Activated B cell treated with CpG ODN at 0.5 μM for 24 hours (primary cell): ENCODE measurements at regions of chr9 and their contacts with region 1.

Region 1: GRCh38 chr9:90219548-90220118 is 423.0 kb downstream of the DIRAS2 start:
- DNase-seq: peak; percentile 55
- ATAC-seq: peak; percentile 86
- H3K4me3 Mint-ChIP-seq: peak overlapping the region; percentile 46
- H3K27ac Mint-ChIP-seq: no peak overlapping the region
- H3K4me1 Mint-ChIP-seq: peaks cover 10% of the 10 kb centered on the region
- H3K27me3 Mint-ChIP-seq: peaks cover 9% of the 10 kb centered on the region
- CTCF ChIP-seq: no peak

Region 2: DNA sequence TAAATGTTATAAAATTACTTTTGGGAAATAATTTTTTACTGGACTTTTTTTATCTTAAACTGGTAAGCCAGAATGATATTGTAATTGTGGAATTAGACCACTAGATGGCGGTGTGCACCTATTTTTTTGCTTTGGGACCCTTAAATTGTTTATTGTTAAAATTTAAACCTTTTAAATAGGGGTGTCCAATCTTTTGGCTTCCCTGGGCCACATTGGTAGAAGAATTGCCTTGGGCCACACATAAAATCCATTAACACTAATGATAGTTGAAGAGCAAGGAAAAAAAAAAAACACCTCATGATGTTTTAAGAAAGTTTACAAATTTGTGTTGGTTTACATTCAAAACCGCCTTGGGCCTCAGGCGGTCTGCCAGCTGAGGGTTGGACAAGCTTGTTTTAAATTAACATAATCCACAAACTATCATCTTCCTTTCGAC is 643.2 kb before region 1 on chr9:
- CTCF ChIA-PET with region 1: no interaction called
- POLR2A ChIA-PET with region 1: no interaction called
- intact Hi-C with region 1: loop called (anchors 5 kb)
- DNase-seq: no peak
- ATAC-seq: no peak
- H3K4me3 Mint-ChIP-seq: no peak overlapping the region
- H3K27ac Mint-ChIP-seq: no peak overlapping the region
- H3K4me1 Mint-ChIP-seq: no peaks in the 10 kb centered on the region
- H3K27me3 Mint-ChIP-seq: peaks cover 32% of the 10 kb centered on the region
- CTCF ChIP-seq: peak; percentile 54

Region 3: DNA sequence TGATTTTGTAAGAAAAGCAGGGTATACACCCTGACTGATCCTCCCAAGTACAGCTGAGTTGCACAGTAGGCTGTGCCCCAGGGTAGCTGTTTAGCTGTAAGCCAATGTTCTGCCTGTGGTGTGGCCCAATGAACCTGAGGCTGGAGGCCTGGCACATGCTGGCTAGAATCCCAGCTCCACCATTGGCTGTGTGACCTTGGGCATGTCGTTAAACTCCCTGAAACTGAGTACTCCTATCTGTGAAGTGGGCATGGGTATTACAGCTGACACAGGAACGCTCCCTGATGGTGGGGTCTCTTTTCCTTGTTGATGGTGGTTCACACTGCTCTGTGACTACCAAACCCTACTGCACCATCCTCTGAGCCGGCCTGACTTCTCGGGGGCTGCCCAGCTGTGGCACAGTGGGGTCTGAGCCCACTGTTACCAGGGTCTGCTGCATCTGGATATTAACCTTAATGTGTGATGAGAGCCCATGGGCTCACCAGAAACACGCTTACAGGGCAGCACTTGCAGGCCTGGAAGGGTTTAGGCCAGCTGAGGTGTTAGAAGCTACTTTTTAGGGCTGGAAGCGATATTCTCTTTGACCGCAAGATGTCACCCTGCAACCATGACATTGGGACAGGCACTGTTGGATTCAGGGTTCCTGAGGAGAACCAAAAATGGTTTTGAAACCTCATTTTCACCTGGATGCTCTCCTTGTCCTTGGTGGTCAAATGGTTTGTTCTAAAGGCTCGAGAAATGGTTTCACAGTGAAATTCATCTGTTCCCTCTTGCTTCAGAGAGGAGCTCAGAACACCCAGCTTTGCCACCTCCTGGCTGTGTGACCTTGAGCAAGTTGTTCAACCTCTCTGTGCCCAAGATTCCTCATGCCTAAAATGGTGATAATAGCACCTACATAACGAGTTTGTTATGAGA is 621.7 kb before region 1 on chr9:
- CTCF ChIA-PET with region 1: interaction called, 4 read pairs
- POLR2A ChIA-PET with region 1: no interaction called
- intact Hi-C with region 1: loop called (anchors 1 kb)
- DNase-seq: no peak
- ATAC-seq: peak; percentile 43
- H3K4me3 Mint-ChIP-seq: no peak overlapping the region
- H3K27ac Mint-ChIP-seq: no peak overlapping the region
- H3K4me1 Mint-ChIP-seq: peaks cover 1% of the 10 kb centered on the region
- H3K27me3 Mint-ChIP-seq: peaks cover 8% of the 10 kb centered on the region
- CTCF ChIP-seq: peak; percentile 23

Region 4: GRCh38 chr9:90189306-90189705 is 30.3 kb before region 1 on chr9:
- CTCF ChIA-PET with region 1: no interaction called
- POLR2A ChIA-PET with region 1: no interaction called
- intact Hi-C with region 1: loop called (anchors 2 kb)
- DNase-seq: no peak
- ATAC-seq: peak; percentile 99
- H3K4me3 Mint-ChIP-seq: peak overlapping the region; percentile 74
- H3K27ac Mint-ChIP-seq: peak overlapping the region; percentile 80
- H3K4me1 Mint-ChIP-seq: peaks cover 58% of the 10 kb centered on the region
- H3K27me3 Mint-ChIP-seq: no peaks in the 10 kb centered on the region
- CTCF ChIP-seq: no peak

Region 5: DNA sequence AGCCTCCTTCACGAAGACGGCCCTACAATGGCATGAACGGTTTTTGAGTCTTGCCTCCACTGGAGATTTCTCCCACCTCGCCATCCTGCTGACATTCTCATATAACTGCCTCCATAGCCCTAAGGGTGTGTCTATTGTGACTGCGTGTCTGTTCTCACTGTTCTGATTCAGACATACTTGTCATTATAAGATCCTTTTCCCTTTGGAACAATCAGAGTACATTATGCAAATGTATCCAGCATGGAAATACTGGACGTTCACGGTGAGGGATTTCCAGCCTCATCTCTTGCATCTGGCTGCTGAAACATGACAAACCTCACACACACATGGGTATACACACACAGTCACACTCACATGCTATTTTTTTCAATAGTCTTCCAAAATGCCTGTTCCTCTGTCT is 20.9 kb after region 1 on chr9:
- CTCF ChIA-PET with region 1: no interaction called
- POLR2A ChIA-PET with region 1: no interaction called
- intact Hi-C with region 1: no loop called
- DNase-seq: no peak
- ATAC-seq: no peak
- H3K4me3 Mint-ChIP-seq: no peak overlapping the region
- H3K27ac Mint-ChIP-seq: no peak overlapping the region
- H3K4me1 Mint-ChIP-seq: no peaks in the 10 kb centered on the region
- H3K27me3 Mint-ChIP-seq: peaks cover 12% of the 10 kb centered on the region
- CTCF ChIP-seq: no peak